ENCODE measurements at regions of chr1 and their contacts with region 1.

Region 1: GRCh38 chr1:224329842-224330753 is at the start of gene NVL:
- DNase-seq: peak; percentile 75 to 88 (median 84)
- ATAC-seq: peak; percentile 95 to 99 (median 98)
- H3K4me3 ChIP-seq: peak within 1 kb of the TSS; percentile 62 to 89 (median 82)
- H3K27ac ChIP-seq: peak within 1 kb of the TSS; percentile 91 to 94 (median 92)
- H3K4me1 ChIP-seq: peaks cover 9 to 21% (median 15%) of the 10 kb centered on the region in 3 donors
- H3K27me3 ChIP-seq: no peaks in the 10 kb centered on the region
- CTCF ChIP-seq: no peak
- total RNA-seq, gene NVL: 9.6 to 13.6 (median 12.3) TPM

Region 2: GRCh38 chr1:224080115-224080774 is 249.9 kb before region 1 on chr1:
- intact Hi-C with region 1: no loop called
- DNase-seq: no peak
- ATAC-seq: peak in 1 of 4 donors; percentile 16
- H3K4me3 ChIP-seq: no peak overlapping the region
- H3K27ac ChIP-seq: no peak overlapping the region
- H3K4me1 ChIP-seq: no peaks in the 10 kb centered on the region
- H3K27me3 ChIP-seq: no peaks in the 10 kb centered on the region
- CTCF ChIP-seq: no peak

Region 3: GRCh38 chr1:224113918-224114786 is 215.9 kb before region 1 on chr1 and contains the start of gene FBXO28:
- intact Hi-C with region 1: loop called in 1 of 3 experiments (anchors 10 kb)
- DNase-seq: peak; percentile 90 to 98 (median 94)
- ATAC-seq: peak; percentile 99 to 100 (median 100)
- H3K4me3 ChIP-seq: peak within 1 kb of the TSS; percentile 75 to 98 (median 91)
- H3K27ac ChIP-seq: peak within 1 kb of the TSS; percentile 65 to 89 (median 85)
- H3K4me1 ChIP-seq: peaks cover 0 to 19% (median 10%) of the 10 kb centered on the region in 3 donors
- H3K27me3 ChIP-seq: no peaks in the 10 kb centered on the region
- CTCF ChIP-seq: no peak
- total RNA-seq, gene FBXO28: 9.2 to 14.9 (median 13.0) TPM

Region 4: DNA sequence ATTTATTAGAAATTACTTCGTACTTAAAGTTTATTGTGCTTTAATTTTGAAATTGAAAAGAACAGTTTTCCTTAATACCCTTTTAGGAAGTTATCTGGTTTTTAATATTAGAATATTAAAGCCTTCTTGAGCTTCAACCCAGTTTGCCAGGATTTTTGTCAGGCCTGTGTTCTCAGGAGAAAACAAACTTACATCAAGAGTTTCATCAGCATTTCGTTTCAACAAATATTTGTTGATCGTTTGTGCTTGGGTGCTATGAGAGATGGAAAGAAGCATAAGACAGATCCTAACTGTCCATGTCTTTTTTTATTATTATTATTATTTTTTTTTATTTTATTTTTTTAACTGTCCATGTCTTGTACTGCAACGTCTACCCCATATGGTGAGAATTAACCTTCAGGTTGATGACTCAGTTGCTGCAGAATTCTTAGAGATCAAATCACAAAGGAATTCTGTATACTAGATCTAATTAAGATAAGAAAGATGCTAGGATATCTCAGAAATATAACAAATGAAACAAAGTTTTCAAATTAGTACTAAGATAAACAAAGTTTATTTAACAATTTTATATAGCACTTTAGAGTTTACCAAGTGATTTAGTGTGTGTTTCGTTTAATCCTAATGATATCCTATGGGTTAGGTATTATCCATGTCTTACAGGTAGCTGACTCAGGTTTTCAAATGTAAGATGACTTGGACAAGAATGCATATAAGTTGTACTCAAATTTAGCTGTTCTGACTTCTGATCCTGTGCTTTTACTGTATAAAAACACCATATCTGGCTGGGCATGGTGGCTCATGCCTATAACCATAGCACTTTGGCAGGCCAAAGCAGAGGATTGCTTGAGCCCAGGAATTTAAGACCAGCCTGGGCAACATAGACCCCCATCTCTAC is 201.9 kb before region 1 on chr1:
- intact Hi-C with region 1: loop called in 1 of 3 experiments (anchors 10 kb)
- DNase-seq: no peak
- ATAC-seq: no peak
- H3K4me3 ChIP-seq: no peak overlapping the region
- H3K27ac ChIP-seq: no peak overlapping the region
- H3K4me1 ChIP-seq: no peaks in the 10 kb centered on the region
- H3K27me3 ChIP-seq: no peaks in the 10 kb centered on the region
- CTCF ChIP-seq: no peak